K562 (cell line): ENCODE measurements at regions of chr19 and their contacts with region 1.

Region 1: GRCh38 chr19:40416918-40417642 is 3.9 kb upstream of the PRX start:
- DNase-seq: peak; percentile 61 to 87 (median 68)
- ATAC-seq: peak; percentile 74
- H3K4me3 ChIP-seq: peak overlapping the region; percentile 13
- H3K27ac ChIP-seq: peak overlapping the region; percentile 88
- H3K4me1 ChIP-seq: peaks cover 30 to 57% of the 10 kb centered on the region in 2 experiments
- H3K27me3 ChIP-seq: no peaks in the 10 kb centered on the region
- CTCF ChIP-seq: no peak
- EP300 ChIP-seq: peak; percentile 61
- POLR2A ChIP-seq: peak; percentile 78
- RAD21 ChIP-seq: no peak

Region 2: GRCh38 chr19:40403262-40403984 is 13.7 kb before region 1 on chr19:
- CTCF ChIA-PET with region 1: no interaction called
- POLR2A ChIA-PET with region 1: interaction called, 17 read pairs
- in situ Hi-C with region 1: no loop called
- intact Hi-C with region 1: no loop called
- DNase-seq: peak; percentile 96 to 98 (median 97)
- ATAC-seq: peak; percentile 91
- H3K4me3 ChIP-seq: peak overlapping the region; percentile 64
- H3K27ac ChIP-seq: peak overlapping the region; percentile 70; the same call in 2 of the 3 replicates
- H3K4me1 ChIP-seq: peaks cover 24 to 37% of the 10 kb centered on the region in 2 experiments
- H3K27me3 ChIP-seq: no peaks in the 10 kb centered on the region
- CTCF ChIP-seq: 0 out of 6 replicates have a peak, but pooled peaks of 1 of the 3 experiments have one; percentile 6
- EP300 ChIP-seq: no peak
- POLR2A ChIP-seq: no peak; the same call in 1 of the 2 replicates
- RAD21 ChIP-seq: no peak

Region 3: GRCh38 chr19:40682431-40682964 is 265.4 kb after region 1 on chr19:
- CTCF ChIA-PET with region 1: no interaction called
- POLR2A ChIA-PET with region 1: no interaction called
- in situ Hi-C with region 1: no loop called
- intact Hi-C with region 1: no loop called
- DNase-seq: no peak
- ATAC-seq: no peak
- H3K4me3 ChIP-seq: no peak overlapping the region
- H3K27ac ChIP-seq: no peak overlapping the region
- H3K4me1 ChIP-seq: peaks cover 5 to 16% of the 10 kb centered on the region in 2 experiments; a peak in 4 of 5 replicates
- H3K27me3 ChIP-seq: no peaks in the 10 kb centered on the region
- CTCF ChIP-seq: no peak
- EP300 ChIP-seq: no peak
- POLR2A ChIP-seq: no peak
- RAD21 ChIP-seq: no peak